CD8-positive, alpha-beta T cell (primary cell): ENCODE measurements at regions of chr13 and their contacts with region 1.

Region 1: GRCh38 chr13:95834134-95834765 is 157.3 kb downstream of the DNAJC3 start:
- DNase-seq: peak; percentile 33 to 81 (median 64)
- ATAC-seq: peak; percentile 77
- H3K4me3 ChIP-seq: no peak overlapping the region
- H3K4me3 Mint-ChIP-seq: no peak overlapping the region
- H3K27ac ChIP-seq: no peak overlapping the region
- H3K27ac Mint-ChIP-seq: no peak overlapping the region
- H3K4me1 ChIP-seq: no peaks in the 10 kb centered on the region
- H3K4me1 Mint-ChIP-seq: no peaks in the 10 kb centered on the region
- H3K27me3 ChIP-seq: no peaks in the 10 kb centered on the region
- H3K27me3 Mint-ChIP-seq: peaks cover 4% of the 10 kb centered on the region
- CTCF ChIP-seq: peak; percentile 96

Region 2: DNA sequence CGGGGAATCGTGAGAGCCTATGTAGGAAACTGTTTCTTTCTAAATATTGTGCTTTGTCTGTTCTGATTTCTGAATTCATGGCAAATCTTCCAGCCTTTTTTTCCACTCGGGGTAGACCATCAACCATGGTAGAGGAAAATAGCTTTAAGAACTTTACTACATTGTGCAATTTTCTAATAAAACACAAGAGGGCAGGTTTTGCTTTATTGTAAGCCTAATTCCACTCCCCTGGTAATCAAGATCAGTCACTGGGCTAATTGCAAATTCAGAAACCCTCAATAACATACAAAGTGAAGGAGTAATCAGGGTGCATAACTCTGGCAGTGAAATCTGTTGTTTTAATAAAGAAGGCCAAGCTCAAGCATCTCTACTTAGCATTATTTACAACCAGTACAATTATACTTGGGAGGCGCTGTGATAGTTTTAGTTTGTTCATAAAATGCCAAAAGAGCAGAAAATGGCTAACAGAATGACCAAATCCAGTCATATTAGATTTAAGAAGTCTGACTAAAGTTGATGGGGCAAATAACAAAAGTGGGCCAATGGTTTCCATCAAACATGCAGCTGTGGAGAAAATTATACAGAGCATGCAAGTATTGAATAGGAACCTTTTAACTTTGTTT is 1398.5 kb before region 1 on chr13:
- CTCF ChIA-PET with region 1: no interaction called
- POLR2A ChIA-PET with region 1: no interaction called
- intact Hi-C with region 1: loop called in 1 of 2 experiments (anchors 10 kb)
- DNase-seq: peak in 2 of 9 experiments; percentile 54 to 64
- ATAC-seq: peak; percentile 81
- H3K4me3 ChIP-seq: no peak overlapping the region
- H3K4me3 Mint-ChIP-seq: no peak overlapping the region
- H3K27ac ChIP-seq: no peak overlapping the region
- H3K27ac Mint-ChIP-seq: no peak overlapping the region
- H3K4me1 ChIP-seq: no peaks in the 10 kb centered on the region
- H3K4me1 Mint-ChIP-seq: peaks cover 4% of the 10 kb centered on the region
- H3K27me3 ChIP-seq: no peaks in the 10 kb centered on the region
- H3K27me3 Mint-ChIP-seq: no peaks in the 10 kb centered on the region
- CTCF ChIP-seq: peak; percentile 82

Region 3: DNA sequence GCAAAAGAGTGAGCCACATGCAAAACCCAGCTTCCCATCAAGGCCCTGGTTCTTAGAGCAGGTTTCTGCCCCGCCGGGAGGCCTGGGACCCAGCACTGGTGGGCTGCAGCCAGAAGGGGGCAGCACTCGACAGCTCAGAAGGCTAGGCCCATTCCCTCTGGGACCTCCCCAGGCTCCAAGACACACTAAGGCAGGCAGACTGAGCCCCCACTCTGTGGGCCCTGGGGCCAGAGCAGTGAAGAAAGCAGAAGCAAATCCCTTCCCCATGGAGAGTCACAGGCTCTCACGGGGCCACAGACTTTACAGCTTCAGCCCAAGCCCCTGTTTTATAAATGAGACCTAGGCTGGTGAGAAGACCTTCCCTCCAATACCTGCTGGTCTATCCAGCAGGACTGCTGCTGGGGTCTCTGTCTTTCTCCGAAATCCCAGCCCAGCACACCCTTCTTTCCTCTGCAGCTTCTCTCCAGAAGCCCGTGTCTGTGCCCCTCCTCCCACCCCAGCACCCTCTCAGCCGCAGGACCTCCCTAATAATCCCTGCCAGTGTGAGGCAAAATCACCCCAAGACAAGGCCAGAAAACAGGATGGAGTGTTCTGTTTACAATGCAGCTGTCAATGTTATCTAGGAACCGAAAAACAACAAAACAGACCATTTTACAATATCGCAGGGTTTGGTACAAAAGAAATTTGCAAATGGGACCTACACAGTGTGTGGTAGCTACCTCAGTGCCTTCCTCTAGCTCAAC is 642.3 kb before region 1 on chr13:
- CTCF ChIA-PET with region 1: interaction called, 6 read pairs
- POLR2A ChIA-PET with region 1: no interaction called
- intact Hi-C with region 1: loop called (anchors 2 to 10 kb)
- DNase-seq: peak; percentile 29 to 74 (median 57)
- ATAC-seq: peak; percentile 65
- H3K4me3 ChIP-seq: no peak overlapping the region
- H3K4me3 Mint-ChIP-seq: no peak overlapping the region
- H3K27ac ChIP-seq: no peak overlapping the region
- H3K27ac Mint-ChIP-seq: no peak overlapping the region
- H3K4me1 ChIP-seq: no peaks in the 10 kb centered on the region
- H3K4me1 Mint-ChIP-seq: peaks cover 8% of the 10 kb centered on the region
- H3K27me3 ChIP-seq: no peaks in the 10 kb centered on the region
- H3K27me3 Mint-ChIP-seq: no peaks in the 10 kb centered on the region
- CTCF ChIP-seq: peak; percentile 54

Region 4: DNA sequence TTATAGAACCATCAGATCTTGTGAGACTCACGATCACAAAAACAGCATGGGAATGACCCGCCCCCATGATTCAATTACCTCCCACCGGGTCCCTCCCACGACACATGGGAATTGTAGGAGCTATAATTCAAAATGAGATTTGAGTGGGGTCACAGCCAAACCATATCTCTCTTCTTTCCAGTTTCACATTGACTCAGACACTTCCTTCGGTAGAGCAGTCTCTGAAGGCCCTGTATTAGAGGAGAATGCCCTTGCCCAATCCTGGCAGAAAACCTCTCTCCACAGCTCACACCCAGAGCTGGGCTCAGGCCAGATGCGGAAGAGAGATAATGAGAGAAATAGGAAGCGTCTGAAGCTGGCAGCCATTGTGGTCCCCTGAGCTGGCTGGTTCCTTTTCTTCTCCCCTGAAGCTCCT is 354.1 kb before region 1 on chr13:
- CTCF ChIA-PET with region 1: interaction called, 4 read pairs
- POLR2A ChIA-PET with region 1: no interaction called
- intact Hi-C with region 1: loop called (anchors 1 to 5 kb)
- DNase-seq: peak in 1 of 9 experiments; percentile 23
- ATAC-seq: no peak
- H3K4me3 ChIP-seq: no peak overlapping the region
- H3K4me3 Mint-ChIP-seq: no peak overlapping the region
- H3K27ac ChIP-seq: no peak overlapping the region
- H3K27ac Mint-ChIP-seq: no peak overlapping the region
- H3K4me1 ChIP-seq: no peaks in the 10 kb centered on the region
- H3K4me1 Mint-ChIP-seq: peaks cover 4% of the 10 kb centered on the region
- H3K27me3 ChIP-seq: no peaks in the 10 kb centered on the region
- H3K27me3 Mint-ChIP-seq: peaks cover 5% of the 10 kb centered on the region
- CTCF ChIP-seq: no peak

Region 5: GRCh38 chr13:95624020-95624419 is 210.2 kb before region 1 on chr13:
- CTCF ChIA-PET with region 1: interaction called, 150 read pairs
- POLR2A ChIA-PET with region 1: no interaction called
- intact Hi-C with region 1: loop called (anchors 1 kb)
- DNase-seq: peak in 3 of 9 experiments; percentile 13 to 64 (median 56)
- ATAC-seq: no peak
- H3K4me3 ChIP-seq: no peak overlapping the region
- H3K4me3 Mint-ChIP-seq: no peak overlapping the region
- H3K27ac ChIP-seq: no peak overlapping the region
- H3K27ac Mint-ChIP-seq: no peak overlapping the region
- H3K4me1 ChIP-seq: no peaks in the 10 kb centered on the region
- H3K4me1 Mint-ChIP-seq: no peaks in the 10 kb centered on the region
- H3K27me3 ChIP-seq: no peaks in the 10 kb centered on the region
- H3K27me3 Mint-ChIP-seq: peaks cover 14% of the 10 kb centered on the region
- CTCF ChIP-seq: peak; percentile 58

Region 6: DNA sequence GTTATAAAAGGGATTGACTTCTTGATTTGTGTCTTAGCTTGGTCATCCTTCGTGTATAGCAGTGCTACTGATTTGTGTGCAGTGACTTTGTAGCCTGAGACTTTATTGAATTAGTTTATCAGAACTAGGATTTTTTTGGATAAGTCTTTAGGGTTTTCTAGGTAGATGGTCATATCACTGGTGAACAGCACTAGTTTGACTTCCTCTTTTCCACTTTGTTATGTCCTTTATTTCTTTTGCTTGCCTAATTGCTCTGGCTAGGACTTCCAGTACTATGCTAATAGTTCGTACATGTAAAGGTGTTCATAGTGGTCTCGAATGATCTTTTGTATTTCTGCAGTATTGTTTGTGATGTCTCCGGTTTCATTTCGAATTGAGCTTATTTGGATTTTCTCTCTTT is 11.9 kb before region 1 on chr13:
- CTCF ChIA-PET with region 1: interaction called, 29 read pairs
- POLR2A ChIA-PET with region 1: no interaction called
- intact Hi-C with region 1: no loop called
- DNase-seq: no peak
- ATAC-seq: no peak
- H3K4me3 ChIP-seq: no peak overlapping the region
- H3K4me3 Mint-ChIP-seq: no peak overlapping the region
- H3K27ac ChIP-seq: no peak overlapping the region
- H3K27ac Mint-ChIP-seq: no peak overlapping the region
- H3K4me1 ChIP-seq: no peaks in the 10 kb centered on the region
- H3K4me1 Mint-ChIP-seq: no peaks in the 10 kb centered on the region
- H3K27me3 ChIP-seq: no peaks in the 10 kb centered on the region
- H3K27me3 Mint-ChIP-seq: peaks cover 17% of the 10 kb centered on the region
- CTCF ChIP-seq: no peak